GM12878 (cell line): ENCODE measurements at regions of chr6 and their contacts with region 1.

Region 1: GRCh38 chr6:43334466-43335095 is 26.0 kb upstream of the CRIP3 start:
- DNase-seq: no peak
- ATAC-seq: no peak
- H3K4me3 ChIP-seq: no peak overlapping the region
- H3K27ac ChIP-seq: no peak overlapping the region
- H3K4me1 ChIP-seq: peaks cover 22% of the 10 kb centered on the region
- H3K27me3 ChIP-seq: no peaks in the 10 kb centered on the region
- CTCF ChIP-seq: peak; percentile 36 to 39 (median 37)
- EP300 ChIP-seq: no peak
- POLR2A ChIP-seq: no peak
- RAD21 ChIP-seq: 0 out of 2 replicates have a peak, but pooled peaks have one; percentile 34

Region 2: DNA sequence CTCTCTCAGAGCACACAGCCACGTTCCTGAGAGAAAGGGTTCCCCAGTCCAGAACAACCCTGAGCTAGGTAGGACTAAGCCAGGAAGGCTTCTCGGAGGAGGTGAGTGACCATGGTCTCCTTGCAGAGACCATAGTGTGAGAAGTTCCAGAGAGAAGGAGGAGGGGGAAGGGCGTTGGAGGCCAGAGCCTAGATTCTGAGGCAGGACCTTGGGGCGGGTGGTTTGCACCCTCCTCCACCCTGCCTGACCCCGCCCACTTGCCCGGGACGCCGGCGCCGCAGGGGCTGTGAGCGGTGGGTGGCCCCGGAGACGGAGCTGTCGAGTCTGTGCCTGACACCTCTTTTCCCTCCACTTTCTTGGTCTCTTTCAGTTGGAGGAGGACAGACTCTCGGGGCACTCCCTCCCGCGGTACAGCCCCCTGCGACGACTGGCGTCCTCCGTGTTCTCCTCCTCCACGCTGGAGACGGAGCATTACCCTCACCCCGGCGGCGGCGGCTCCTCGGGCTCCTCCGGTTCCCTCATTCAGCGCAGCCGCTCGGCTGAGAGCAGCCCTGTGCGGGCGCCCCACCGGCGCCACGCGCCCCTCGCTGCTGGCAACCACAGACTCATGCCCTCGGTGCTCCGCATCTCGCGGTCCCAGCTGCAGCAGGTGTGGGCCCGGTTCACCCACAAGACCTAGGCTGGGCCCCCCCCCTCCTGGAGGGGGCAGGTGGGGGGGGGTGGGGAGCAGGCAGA is 65.1 kb before region 1 on chr6:
- CTCF ChIA-PET with region 1: interaction called, 15 read pairs
- POLR2A ChIA-PET with region 1: interaction called, 6 read pairs
- RAD21 ChIA-PET with region 1: interaction called, 16 read pairs
- SMC1A ChIA-PET with region 1: interaction called, 11 read pairs
- in situ Hi-C with region 1: no loop called
- intact Hi-C with region 1: no loop called
- DNase-seq: no peak
- ATAC-seq: peak; percentile 52
- H3K4me3 ChIP-seq: no peak overlapping the region
- H3K27ac ChIP-seq: no peak overlapping the region
- H3K4me1 ChIP-seq: peaks cover 19% of the 10 kb centered on the region
- H3K27me3 ChIP-seq: no peaks in the 10 kb centered on the region
- CTCF ChIP-seq: no peak
- EP300 ChIP-seq: no peak
- POLR2A ChIP-seq: no peak
- RAD21 ChIP-seq: no peak

Region 3: DNA sequence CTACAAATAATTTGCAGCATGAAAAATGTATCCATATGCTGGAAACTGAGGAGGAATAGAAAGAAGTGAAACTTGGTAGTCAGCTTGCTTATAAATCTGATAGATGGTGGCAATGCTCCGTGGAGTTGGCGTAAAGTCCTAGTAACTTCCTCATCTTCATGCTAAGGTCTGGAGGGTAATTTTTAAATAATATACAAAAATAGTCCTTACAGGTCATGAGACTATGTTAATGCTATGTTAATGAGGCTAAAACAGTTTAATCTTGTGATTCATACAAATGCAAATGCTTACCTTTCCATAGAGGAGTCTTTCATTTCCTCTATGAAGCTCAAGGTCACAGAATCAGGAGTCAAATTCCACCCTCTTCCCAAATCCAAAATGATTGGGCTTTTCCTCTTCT is 16.6 kb before region 1 on chr6:
- CTCF ChIA-PET with region 1: interaction called, 83 read pairs
- POLR2A ChIA-PET with region 1: interaction called, 21 read pairs
- RAD21 ChIA-PET with region 1: interaction called, 8 read pairs
- SMC1A ChIA-PET with region 1: interaction called, 90 read pairs
- in situ Hi-C with region 1: no loop called
- intact Hi-C with region 1: no loop called
- DNase-seq: no peak
- ATAC-seq: no peak
- H3K4me3 ChIP-seq: no peak overlapping the region
- H3K27ac ChIP-seq: no peak overlapping the region
- H3K4me1 ChIP-seq: peaks cover 26% of the 10 kb centered on the region
- H3K27me3 ChIP-seq: no peaks in the 10 kb centered on the region
- CTCF ChIP-seq: no peak
- EP300 ChIP-seq: no peak
- POLR2A ChIP-seq: no peak
- RAD21 ChIP-seq: no peak

Region 4: GRCh38 chr6:43355862-43356590 is 21.4 kb after region 1 on chr6:
- CTCF ChIA-PET with region 1: interaction called, 41 read pairs
- POLR2A ChIA-PET with region 1: interaction called, 21 read pairs
- RAD21 ChIA-PET with region 1: interaction called, 22 read pairs
- SMC1A ChIA-PET with region 1: interaction called, 238 read pairs
- in situ Hi-C with region 1: no loop called
- intact Hi-C with region 1: no loop called
- DNase-seq: no peak
- ATAC-seq: peak; percentile 81
- H3K4me3 ChIP-seq: no peak overlapping the region
- H3K27ac ChIP-seq: no peak overlapping the region
- H3K4me1 ChIP-seq: peaks cover 2% of the 10 kb centered on the region
- H3K27me3 ChIP-seq: no peaks in the 10 kb centered on the region
- CTCF ChIP-seq: peak; percentile 26 to 55 (median 48); a peak in 4 of 6 replicates
- EP300 ChIP-seq: no peak
- POLR2A ChIP-seq: no peak
- RAD21 ChIP-seq: peak; percentile 52

Region 5: DNA sequence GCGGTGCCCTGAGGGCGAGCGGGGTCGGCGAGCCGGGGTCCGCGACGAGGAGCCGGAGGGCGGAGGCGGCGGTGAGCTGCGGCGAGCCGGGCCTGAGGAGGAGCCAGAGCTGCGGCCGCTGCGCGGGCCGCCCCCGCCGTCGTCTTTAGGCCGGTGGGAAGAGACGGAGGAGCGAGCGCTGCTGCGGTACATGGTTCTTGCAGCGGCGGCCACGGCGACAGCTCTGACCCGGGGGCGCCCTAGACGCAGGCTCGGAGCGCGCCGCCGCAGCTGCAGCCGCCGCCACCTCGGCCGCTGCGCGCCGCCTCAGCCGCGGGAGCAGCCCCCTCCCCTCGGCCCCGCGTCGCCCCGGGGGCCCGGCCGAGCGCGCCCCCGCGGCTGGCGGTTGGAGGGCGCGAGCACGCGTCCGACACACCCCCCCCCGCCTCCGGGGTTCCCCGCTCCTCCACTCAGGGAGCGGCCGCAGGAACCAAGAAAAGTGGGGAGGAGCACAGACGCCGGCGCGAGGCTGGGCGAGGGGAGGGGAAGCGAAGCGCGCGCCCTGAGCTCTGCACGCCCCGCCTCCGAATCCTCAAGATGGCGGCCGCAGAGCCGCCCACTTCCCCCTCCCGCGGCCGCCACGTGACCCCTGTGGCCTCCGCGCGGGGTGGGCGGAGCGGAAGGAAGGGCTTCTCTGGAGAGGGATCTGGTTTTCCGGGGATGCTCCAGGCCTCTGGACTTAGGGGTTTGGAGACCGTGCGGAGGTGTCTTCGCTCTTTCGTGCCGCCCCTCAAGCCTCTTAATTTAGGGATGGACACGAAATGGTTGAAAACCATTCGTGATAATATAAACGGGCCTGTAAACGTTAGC is 34.8 kb after region 1 on chr6 and contains the start of gene ZNF318:
- CTCF ChIA-PET with region 1: interaction called, 21 read pairs
- POLR2A ChIA-PET with region 1: interaction called, 21 read pairs
- RAD21 ChIA-PET with region 1: interaction called, 25 read pairs
- SMC1A ChIA-PET with region 1: interaction called, 238 read pairs
- in situ Hi-C with region 1: no loop called
- intact Hi-C with region 1: loop called (anchors 2 kb)
- DNase-seq: peak; percentile 82
- ATAC-seq: peak; percentile 83
- H3K4me3 ChIP-seq: peak within 1 kb of the TSS; percentile 84
- H3K27ac ChIP-seq: peak within 1 kb of the TSS; percentile 89
- H3K4me1 ChIP-seq: peaks cover 26% of the 10 kb centered on the region
- H3K27me3 ChIP-seq: no peaks in the 10 kb centered on the region
- CTCF ChIP-seq: no peak
- EP300 ChIP-seq: peak in 1 of 2 experiments; percentile 47; a peak in 2 of 4 replicates
- POLR2A ChIP-seq: peak; percentile 82
- RAD21 ChIP-seq: no peak
- polyA plus RNA-seq, gene ZNF318: 4.8 to 6.3 TPM

Region 6: DNA sequence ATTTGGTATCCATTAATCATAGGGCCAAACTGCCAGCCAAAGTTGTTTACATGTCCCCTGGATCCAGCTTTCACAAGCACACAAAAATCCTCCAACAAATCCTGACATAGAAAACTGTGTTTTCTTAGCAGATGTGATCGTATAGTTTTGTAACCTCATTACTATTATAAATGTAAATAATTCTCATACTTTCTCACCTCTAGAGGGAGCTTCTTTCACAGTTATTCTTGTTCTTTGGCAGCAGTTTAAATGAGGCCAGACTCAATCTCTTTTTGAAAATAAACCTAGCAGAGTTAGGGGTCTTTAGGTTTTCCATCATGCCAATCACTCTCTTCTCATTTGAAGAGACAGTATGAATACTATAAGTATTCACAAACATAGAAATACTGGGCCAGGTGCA is 51.9 kb after region 1 on chr6:
- CTCF ChIA-PET with region 1: interaction called, 15 read pairs
- POLR2A ChIA-PET with region 1: interaction called, 53 read pairs
- RAD21 ChIA-PET with region 1: interaction called, 68 read pairs
- SMC1A ChIA-PET with region 1: interaction called, 85 read pairs
- in situ Hi-C with region 1: no loop called
- intact Hi-C with region 1: loop called (anchors 2 kb)
- DNase-seq: no peak
- ATAC-seq: no peak
- H3K4me3 ChIP-seq: no peak overlapping the region
- H3K27ac ChIP-seq: peak overlapping the region; percentile 86; the same call in 1 of the 2 replicates
- H3K4me1 ChIP-seq: peaks cover 41% of the 10 kb centered on the region
- H3K27me3 ChIP-seq: no peaks in the 10 kb centered on the region
- CTCF ChIP-seq: peak; percentile 20 to 47 (median 39); a peak in 4 of 6 replicates
- EP300 ChIP-seq: no peak
- POLR2A ChIP-seq: no peak
- RAD21 ChIP-seq: peak; percentile 54; the same call in 1 of the 2 replicates

Region 7: DNA sequence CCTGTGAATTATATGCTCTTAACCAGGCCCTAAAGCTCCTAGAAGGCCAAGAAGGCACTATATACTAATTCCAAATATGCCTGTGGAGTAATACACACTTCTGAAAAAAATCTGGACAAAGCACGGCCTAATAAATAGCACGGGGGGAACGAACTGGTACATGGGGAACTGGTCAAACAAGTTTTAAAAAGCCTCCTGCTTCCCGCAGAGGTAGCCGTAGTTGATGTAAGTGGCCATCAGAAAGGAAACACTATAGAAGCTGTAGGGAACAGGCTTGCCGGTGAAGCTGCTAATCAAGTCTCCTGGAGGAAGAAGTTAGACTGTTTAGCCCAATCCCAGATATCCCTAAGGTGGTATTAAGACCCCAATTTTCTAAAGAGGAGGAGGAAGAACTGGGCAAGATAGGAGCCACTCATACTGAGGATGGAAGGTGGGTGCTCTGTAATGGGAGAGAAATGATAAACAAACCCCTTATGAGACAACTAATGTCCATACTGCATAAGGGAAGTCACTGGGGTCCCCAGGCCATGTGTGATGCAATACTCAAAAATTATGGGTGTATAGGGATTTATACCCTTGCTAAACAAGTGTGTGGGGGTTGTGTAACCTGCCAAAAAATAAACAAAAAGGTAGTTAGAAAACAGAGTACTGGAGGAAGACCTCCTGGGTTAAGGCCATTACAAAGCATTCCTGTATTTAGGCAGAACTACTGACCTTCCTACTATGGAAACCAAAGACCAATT is 62.0 kb after region 1 on chr6:
- CTCF ChIA-PET with region 1: interaction called, 11 read pairs
- POLR2A ChIA-PET with region 1: interaction called, 3 read pairs
- RAD21 ChIA-PET with region 1: interaction called, 13 read pairs
- SMC1A ChIA-PET with region 1: interaction called, 15 read pairs
- in situ Hi-C with region 1: no loop called
- intact Hi-C with region 1: no loop called
- DNase-seq: no peak
- ATAC-seq: no peak
- H3K4me3 ChIP-seq: no peak overlapping the region
- H3K27ac ChIP-seq: no peak overlapping the region
- H3K4me1 ChIP-seq: peaks cover 6% of the 10 kb centered on the region; the same call in 1 of the 2 replicates
- H3K27me3 ChIP-seq: no peaks in the 10 kb centered on the region
- CTCF ChIP-seq: no peak
- EP300 ChIP-seq: no peak
- POLR2A ChIP-seq: no peak
- RAD21 ChIP-seq: no peak

Region 8: GRCh38 chr6:43495409-43495941 is 160.9 kb after region 1 on chr6:
- CTCF ChIA-PET with region 1: no interaction called
- POLR2A ChIA-PET with region 1: no interaction called
- RAD21 ChIA-PET with region 1: no interaction called
- SMC1A ChIA-PET with region 1: no interaction called
- in situ Hi-C with region 1: no loop called
- intact Hi-C with region 1: no loop called
- DNase-seq: no peak
- ATAC-seq: no peak
- H3K4me3 ChIP-seq: no peak overlapping the region
- H3K27ac ChIP-seq: no peak overlapping the region
- H3K4me1 ChIP-seq: no peaks in the 10 kb centered on the region
- H3K27me3 ChIP-seq: no peaks in the 10 kb centered on the region
- CTCF ChIP-seq: peak in 2 of 3 experiments; percentile 14 to 22; a peak in 2 of 6 replicates
- EP300 ChIP-seq: no peak
- POLR2A ChIP-seq: no peak
- RAD21 ChIP-seq: no peak